ENCODE measurements at regions of chr16 and their contacts with region 1.

Region 1: DNA sequence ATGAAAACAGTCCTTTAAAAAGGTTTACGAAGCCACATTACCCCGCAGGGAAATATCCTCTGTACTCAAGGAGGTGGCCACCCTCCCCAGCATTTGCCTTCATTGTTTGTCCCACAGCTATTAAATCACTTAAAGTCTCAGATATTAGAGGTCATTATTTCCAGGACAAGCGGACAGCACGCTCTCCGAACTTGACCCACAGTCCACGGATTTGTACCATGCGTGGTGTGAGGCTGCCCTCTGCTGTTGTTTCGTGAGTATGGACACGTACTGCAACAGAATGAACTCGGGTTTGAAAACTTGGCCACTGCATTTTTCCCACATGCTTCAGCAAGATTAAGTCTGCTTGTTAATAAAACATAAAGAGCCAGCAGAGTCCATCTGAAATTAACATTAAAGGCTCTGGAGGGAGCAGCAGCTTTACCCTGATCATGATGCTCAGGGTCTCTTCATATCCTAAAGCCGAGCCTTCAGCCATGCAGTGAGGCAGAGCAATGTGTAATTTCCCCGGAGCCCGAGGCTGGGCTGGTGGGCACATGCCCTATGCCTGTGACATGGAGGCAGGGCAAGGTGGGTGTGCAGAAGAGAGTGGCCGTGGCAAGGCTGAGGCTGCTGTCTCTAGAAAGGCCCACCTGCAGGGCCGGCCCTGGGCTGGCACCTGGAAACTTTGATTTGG is 19.7 kb downstream of the MEAK7 start:
- DNase-seq: no peak

Region 2: GRCh38 chr16:83826146-83826913 is 658.4 kb before region 1 on chr16:
- intact Hi-C with region 1: loop called (anchors 10 kb)
- DNase-seq: peak; percentile 92

Region 3: GRCh38 chr16:83967806-83968305 is 516.9 kb before region 1 on chr16 and contains the start of gene NECAB2:
- intact Hi-C with region 1: loop called (anchors 10 kb)
- DNase-seq: peak; percentile 87
- total RNA-seq, gene NECAB2: 2.5 TPM

Region 4: DNA sequence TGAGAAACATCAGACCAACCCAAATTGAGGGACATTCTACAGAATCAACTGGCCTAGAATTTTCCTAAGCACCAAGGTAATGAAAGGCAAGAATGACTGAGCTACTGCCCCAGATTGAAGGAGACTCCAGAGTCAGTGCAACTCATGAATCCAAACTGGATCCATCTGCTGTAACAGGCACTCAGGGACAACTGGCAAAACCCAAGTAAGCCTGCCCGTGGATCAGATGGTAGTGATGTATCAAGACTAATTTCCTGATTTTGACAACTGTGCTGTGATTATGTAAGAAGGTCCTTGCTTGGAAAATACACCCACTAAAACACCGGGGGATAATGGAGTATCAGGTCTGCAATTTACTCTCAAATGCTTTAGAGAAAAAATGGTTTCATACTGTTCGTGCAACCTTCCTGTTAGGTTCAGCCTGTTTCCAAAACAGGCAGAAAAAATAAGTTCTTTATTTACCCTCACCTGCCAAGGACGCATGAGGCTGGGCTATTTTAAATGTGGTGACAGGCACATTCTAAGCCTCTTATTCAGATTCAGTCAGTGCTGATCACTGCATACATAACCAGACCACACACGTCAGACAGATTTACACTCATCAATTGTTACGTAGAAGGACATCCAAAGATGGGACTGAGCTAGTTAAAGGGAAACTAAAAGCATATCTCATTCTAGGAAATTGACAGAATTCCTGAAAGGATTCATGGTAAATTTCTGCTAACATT is 375.0 kb before region 1 on chr16:
- intact Hi-C with region 1: loop called (anchors 10 kb)
- DNase-seq: no peak

Region 5: DNA sequence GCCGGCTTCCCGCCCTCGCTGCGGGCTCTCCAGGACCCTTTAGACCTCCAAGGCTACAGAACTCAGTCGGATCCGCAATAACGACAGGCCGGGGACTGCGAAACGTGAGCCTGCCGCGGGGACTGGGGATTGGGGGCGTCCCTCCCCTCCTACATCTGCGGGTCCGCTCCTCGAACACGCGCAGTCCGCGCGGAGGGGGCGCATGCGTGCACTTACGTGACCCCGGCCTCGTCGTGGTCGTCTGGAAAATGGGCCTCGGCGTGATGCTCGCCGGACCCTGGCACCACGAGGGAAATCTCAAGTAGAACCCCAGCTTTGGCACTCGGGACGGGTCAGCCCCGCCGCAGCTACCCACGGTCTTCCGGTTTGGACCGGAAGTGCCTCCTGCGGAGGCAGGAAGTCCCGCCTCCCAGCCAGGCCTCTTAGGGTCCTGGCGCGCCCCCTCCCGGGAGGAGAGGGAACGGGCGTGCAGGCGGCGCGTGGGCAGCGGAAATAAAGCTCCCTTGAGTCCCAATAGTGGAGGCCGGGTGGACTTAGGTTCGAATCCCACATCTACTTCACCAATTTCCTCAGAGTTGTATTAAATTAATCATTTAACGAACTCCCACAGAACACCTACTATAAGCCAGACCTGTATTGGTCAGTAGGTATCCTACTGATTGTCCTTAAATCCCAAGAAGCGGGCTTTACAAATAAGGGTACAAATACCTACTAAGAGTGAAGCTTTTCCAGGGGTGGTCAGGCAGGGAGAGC is 297.9 kb before region 1 on chr16 and contains the start of gene TAF1C:
- intact Hi-C with region 1: loop called (anchors 10 kb)
- DNase-seq: peak; percentile 95
- total RNA-seq, gene TAF1C: 20.9 TPM

Region 6: DNA sequence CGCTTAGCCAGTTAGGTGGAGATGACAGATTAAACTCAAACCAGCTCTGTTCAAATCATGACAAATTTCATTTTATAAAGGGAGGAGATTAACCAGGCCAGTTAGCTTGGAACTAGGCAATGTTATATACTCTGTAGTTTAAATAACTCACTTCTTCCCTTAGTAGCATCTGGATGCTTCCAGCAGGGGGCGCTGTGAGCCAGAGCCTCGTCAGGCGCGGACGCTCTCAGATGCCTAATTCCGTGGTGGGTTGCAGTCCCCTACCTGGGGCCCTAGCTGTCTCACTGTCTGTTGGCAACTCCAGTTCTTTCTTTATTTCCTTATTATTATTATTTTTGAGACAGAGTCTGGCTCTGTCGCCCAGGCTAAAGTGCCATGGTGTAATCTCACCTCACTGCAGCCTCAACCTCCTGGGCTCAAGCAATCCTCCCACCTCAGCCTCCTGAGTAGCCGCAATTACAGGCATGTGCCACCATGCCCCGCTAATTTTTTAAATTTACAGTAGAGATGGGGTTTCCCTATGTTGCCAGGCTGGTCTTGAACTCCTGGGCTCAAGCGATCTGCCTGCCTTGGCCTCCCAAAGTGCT is 207.4 kb before region 1 on chr16:
- intact Hi-C with region 1: loop called (anchors 1 kb)
- DNase-seq: no peak

Region 7: DNA sequence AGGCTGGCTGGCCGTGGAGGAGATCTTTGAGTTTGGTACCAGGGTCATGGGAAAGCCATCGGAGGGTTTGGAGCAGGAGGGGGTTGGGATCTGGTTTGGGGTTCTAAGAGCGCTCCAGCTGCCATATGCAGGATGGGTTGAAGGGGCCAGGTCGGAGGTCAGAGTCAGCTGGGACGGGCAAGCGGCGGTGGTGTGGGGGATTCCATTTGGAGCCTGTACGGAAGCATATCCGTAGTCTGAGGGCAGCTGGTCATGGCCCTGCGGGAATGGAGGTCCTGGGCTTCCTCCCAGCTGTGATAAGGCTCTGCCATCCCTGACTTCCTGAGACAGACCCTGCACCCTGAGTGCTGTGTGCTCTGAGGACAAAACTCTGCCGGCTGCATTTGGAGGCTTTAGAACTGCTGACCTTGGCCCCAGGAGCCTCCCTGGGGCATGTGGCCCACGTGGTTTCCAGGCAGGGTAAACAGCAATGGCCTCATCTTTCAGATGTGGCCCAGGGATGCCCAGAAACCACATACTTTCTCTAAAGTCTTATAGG is 69.9 kb before region 1 on chr16:
- intact Hi-C with region 1: no loop called
- DNase-seq: peak; percentile 26

Region 8: DNA sequence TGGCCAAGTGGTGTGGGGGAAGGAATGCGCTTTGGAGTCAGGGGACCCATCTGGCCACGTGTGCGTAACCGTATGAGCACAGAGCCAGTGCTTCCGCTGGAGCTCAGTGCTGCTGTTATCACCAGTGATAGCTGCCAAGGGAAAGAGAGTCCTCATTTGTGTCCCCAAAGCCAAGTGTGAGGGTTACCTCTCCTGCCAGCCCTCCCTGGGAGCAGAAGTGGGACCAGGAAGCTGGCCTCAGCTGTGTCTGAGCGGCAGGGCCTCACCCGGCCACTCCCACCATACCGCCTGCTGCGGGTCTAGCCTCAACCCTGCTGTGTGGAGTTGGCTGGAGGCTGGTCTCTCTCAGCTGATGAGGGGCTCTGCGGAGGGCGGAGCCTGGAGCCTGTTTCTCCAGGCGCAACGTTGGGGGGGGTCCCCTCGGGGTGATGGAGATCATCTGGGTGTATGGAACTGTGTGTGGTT is 24.7 kb before region 1 on chr16:
- intact Hi-C with region 1: no loop called
- DNase-seq: peak; percentile 38

Measured in cardiac septum (tissue), 1 donor.